Mammary epithelial cell (primary cell): ENCODE measurements at regions of chr7 and their contacts with region 1.

Region 1: DNA sequence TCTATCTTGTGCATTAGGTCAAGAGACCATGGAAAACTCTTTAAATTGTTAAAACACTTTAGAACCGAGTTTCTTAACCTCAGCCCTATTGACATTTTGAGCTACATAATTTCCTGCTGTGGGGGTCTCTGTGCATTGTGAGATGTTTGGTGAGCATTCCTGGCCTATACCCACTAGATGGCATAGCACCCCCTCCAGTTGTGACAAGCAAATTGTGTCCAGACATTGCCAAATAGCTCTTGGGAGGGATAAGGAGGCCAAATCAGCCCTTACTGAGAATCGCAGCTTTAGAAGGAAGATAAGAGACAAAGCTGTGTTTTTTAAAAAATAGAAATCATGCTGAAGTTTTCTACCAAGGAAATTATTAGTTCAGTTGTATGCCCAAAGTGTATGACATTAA is 1158.5 kb upstream of the C7orf33 start:
- DNase-seq: no peak
- H3K4me3 ChIP-seq: no peak overlapping the region
- H3K27ac ChIP-seq: no peak overlapping the region
- H3K4me1 ChIP-seq: no peaks in the 10 kb centered on the region
- H3K27me3 ChIP-seq: no peaks in the 10 kb centered on the region
- CTCF ChIP-seq: peak in 1 of 2 donors; percentile 24

Region 2: GRCh38 chr7:147523056-147523455 is 91.0 kb after region 1 on chr7:
- CTCF ChIA-PET with region 1: no interaction called
- dilution Hi-C with region 1: loop called (anchors 5 kb)
- in situ Hi-C with region 1: no loop called
- intact Hi-C with region 1: no loop called
- DNase-seq: no peak
- H3K4me3 ChIP-seq: no peak overlapping the region
- H3K27ac ChIP-seq: no peak overlapping the region
- H3K4me1 ChIP-seq: no peaks in the 10 kb centered on the region
- H3K27me3 ChIP-seq: no peaks in the 10 kb centered on the region
- CTCF ChIP-seq: no peak

Region 3: DNA sequence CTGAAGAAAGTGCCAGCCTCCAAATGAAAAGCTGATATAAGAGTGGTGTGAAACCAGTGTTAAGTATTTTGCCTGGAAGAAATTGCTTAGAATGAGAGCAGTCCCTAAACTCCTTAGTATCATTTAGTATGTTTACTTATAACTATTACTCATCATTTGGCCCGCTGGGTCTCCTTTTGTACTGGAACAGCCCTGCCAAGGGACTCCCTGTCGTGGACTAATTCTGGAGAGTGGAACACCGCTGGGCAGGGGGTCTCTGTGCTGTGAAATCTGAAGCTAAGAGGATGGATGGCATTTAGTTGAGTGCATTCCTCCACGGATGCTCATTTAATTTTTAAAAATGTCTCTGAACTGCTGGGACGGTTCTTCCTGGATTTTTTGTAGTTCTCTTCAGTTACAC is 268.6 kb after region 1 on chr7:
- CTCF ChIA-PET with region 1: no interaction called
- dilution Hi-C with region 1: no loop called
- in situ Hi-C with region 1: no loop called
- intact Hi-C with region 1: no loop called
- DNase-seq: no peak
- H3K4me3 ChIP-seq: no peak overlapping the region
- H3K27ac ChIP-seq: no peak overlapping the region
- H3K4me1 ChIP-seq: no peaks in the 10 kb centered on the region
- H3K27me3 ChIP-seq: no peaks in the 10 kb centered on the region
- CTCF ChIP-seq: no peak

Region 4: DNA sequence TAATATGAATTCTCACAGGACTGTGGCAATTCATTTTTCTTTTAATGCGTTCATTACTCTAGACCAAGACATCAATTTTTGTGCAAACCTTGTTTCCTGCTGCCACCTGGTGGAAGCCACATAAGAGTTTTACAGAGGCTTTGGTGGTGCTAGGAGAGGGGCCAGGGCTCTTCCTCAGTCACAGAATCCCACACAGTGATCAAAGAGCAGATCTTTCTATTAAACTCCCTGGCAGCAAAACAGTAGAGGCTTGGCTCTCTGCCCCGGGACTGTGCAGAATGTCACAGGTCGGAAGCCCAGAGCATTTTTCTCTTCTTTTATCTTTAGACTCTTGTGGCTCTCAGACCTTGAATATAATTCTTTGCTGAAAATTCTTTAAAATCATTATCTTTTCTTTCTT is 652.1 kb after region 1 on chr7:
- CTCF ChIA-PET with region 1: interaction called, 3 read pairs
- dilution Hi-C with region 1: no loop called
- in situ Hi-C with region 1: no loop called
- intact Hi-C with region 1: loop called (anchors 1 kb)
- DNase-seq: peak; percentile 5
- H3K4me3 ChIP-seq: no peak overlapping the region
- H3K27ac ChIP-seq: no peak overlapping the region
- H3K4me1 ChIP-seq: no peaks in the 10 kb centered on the region
- H3K27me3 ChIP-seq: no peaks in the 10 kb centered on the region
- CTCF ChIP-seq: peak; percentile 16 to 64